ENCODE measurements at regions of chr14 and their contacts with region 1.

Region 1: GRCh38 chr14:23057757-23058653 is 685 bp upstream of the CDH24 start:
- DNase-seq: peak; percentile 78 to 97 (median 90)
- ATAC-seq: peak; percentile 78 to 92 (median 87)
- H3K4me3 ChIP-seq: peak overlapping the region; percentile 43 to 63 (median 52)
- H3K27ac ChIP-seq: peak overlapping the region; percentile 28 to 65 (median 54)
- H3K4me1 ChIP-seq: peaks cover 0 to 15% (median 3%) of the 10 kb centered on the region in 3 donors
- H3K27me3 ChIP-seq: no peaks in the 10 kb centered on the region
- CTCF ChIP-seq: peak; percentile 93 to 95 (median 94)

Region 2: DNA sequence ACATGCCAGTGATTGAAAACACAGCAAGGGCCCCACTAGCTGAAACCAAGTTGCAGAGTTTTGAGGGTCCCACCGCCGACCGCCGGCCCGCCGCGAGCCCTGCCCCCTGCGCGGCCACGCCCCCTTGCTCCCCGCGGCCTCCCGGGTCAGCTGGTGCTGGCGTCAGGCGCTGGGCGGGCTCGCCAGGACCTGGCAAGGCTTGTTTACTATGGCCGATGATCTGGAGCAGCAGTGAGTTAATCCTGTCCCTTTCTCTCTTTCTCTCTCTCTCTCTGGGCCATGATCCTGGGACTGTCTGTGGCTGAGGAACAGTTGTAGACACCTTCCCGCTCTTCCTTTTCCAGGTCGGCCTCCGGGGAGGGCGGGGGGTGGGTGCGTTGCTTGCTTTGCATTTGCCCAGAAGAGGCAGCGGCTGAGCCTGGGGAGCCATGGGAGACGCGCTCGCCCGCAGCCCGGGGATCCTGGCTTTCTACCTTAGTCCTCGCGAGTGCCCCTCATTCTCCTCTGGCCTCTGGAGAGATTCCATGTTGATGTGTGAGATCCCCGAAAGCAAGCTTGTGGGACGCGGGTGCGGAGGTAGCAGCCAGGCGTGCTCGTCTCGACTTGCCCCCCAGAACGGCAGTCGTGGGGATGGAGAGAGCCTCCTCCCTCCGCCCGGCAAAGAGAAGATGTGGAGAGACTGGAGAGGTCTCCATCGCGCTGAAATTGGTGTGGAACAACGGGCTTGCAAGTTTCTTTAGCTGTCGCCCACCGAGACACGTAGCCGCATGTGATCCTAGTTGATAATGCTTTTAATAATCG is 459.7 kb before region 1 on chr14 and contains the start of gene ABHD4:
- intact Hi-C with region 1: no loop called
- DNase-seq: peak; percentile 77 to 93 (median 88)
- ATAC-seq: peak; percentile 97 to 99 (median 98)
- H3K4me3 ChIP-seq: peak within 1 kb of the TSS; percentile 45 to 78 (median 67)
- H3K27ac ChIP-seq: peak within 1 kb of the TSS; percentile 78 to 97 (median 88)
- H3K4me1 ChIP-seq: peaks cover 10 to 17% (median 10%) of the 10 kb centered on the region in 3 donors
- H3K27me3 ChIP-seq: no peaks in the 10 kb centered on the region
- CTCF ChIP-seq: no peak
- total RNA-seq, gene ABHD4: 7.6 to 25.9 (median 11.8) TPM

Region 3: GRCh38 chr14:22986508-22987054 is 71.4 kb before region 1 on chr14:
- intact Hi-C with region 1: loop called (anchors 2 to 10 kb)
- DNase-seq: peak; percentile 75 to 92 (median 88)
- ATAC-seq: peak; percentile 46 to 69 (median 65)
- H3K4me3 ChIP-seq: no peak overlapping the region
- H3K27ac ChIP-seq: no peak overlapping the region
- H3K4me1 ChIP-seq: peaks cover 0 to 5% (median 0%) of the 10 kb centered on the region in 3 donors
- H3K27me3 ChIP-seq: no peaks in the 10 kb centered on the region
- CTCF ChIP-seq: peak; percentile 76 to 91 (median 84)

Region 4: GRCh38 chr14:23154964-23155587 is 97.1 kb after region 1 on chr14:
- intact Hi-C with region 1: no loop called
- DNase-seq: peak in 5 of 6 donors; percentile 80 to 90 (median 82)
- ATAC-seq: peak; percentile 77 to 91 (median 84)
- H3K4me3 ChIP-seq: peak overlapping the region in 1 of 4 donors; percentile 17
- H3K27ac ChIP-seq: peak overlapping the region; percentile 29 to 89 (median 85)
- H3K4me1 ChIP-seq: peaks cover 7 to 15% (median 9%) of the 10 kb centered on the region in 3 donors
- H3K27me3 ChIP-seq: no peaks in the 10 kb centered on the region
- CTCF ChIP-seq: no peak

Measured in pancreas (tissue), 10 donors.